ENCODE measurements at regions of chr17 and their contacts with region 1.

Region 1: DNA sequence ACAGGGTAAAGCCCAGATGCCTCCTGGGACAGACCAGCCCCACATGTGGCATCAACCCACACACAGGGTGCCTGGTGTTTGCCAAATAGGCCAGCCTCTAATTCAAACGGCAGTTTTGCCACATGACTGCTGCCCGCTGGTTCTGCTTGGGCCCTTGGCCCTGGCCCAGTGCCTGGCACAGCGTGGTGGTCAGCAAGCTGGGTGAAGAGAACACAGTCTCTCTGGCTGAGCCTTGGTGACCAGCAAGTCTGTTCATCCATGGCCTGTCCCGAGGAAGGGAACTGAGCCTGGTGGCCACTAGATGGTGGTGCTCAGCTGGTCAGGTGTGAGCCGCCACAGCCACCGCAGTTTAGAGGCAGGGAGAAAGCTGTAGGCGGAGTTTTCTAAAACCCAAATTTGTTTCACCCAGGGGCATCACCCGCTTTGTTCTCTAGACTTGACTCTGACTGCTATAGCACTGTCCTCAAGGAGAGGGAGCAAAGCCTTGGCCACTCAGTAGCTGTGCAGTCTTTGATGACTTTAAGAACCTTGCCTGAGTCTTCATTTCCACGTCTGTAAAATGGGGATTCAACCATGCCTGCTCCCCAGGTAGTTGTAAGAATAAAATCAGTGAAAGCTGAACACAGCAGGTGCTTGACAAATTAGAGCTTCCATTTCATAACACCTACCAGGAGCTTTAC is 4.7 kb upstream of the GFAP start:
- DNase-seq: peak; percentile 87
- ATAC-seq: peak; percentile 91
- H3K4me3 ChIP-seq: no peak overlapping the region
- H3K27ac ChIP-seq: no peak overlapping the region
- H3K4me1 ChIP-seq: no peaks in the 10 kb centered on the region
- H3K27me3 ChIP-seq: peaks cover 5% of the 10 kb centered on the region
- CTCF ChIP-seq: peak; percentile 79

Region 2: DNA sequence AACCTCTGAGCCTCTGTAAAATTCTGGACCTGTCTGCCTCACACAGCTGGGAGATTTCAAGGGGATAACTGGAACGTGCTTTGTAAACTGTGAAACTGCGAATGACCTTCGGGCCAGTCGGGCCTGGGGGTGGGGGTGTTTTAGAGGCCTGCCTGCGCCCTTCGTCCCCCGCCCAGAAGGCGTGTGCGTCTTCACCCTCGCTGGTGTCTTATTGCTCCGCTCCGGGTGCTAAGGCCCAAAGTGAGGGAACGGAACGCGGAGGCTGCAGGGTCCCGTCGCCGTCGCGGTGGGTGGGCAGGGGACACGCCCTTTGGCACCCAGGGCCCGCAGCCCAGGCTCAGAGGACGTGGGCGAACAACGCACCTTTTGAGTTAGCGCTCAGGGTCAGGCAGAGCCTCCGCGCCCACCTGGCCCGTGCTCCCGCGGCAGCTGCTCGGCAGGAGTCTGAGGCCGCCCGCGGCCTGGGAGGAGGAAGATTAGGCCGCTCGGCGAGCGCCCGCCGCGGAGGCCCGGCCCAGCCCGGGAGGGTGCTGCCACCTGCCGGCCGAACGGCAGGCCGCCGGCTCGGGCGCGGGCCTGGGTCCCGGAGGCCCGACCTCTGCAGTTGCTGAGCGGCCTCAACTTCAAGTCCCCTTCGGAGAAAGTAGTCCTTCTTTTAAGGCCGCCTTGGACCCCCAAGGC is 101.7 kb after region 1 on chr17:
- intact Hi-C with region 1: loop called (anchors 5 kb)
- DNase-seq: peak; percentile 87
- ATAC-seq: peak; percentile 91
- H3K4me3 ChIP-seq: peak overlapping the region; percentile 46
- H3K27ac ChIP-seq: peak overlapping the region; percentile 53
- H3K4me1 ChIP-seq: peaks cover 20% of the 10 kb centered on the region
- H3K27me3 ChIP-seq: peaks cover 9% of the 10 kb centered on the region
- CTCF ChIP-seq: peak; percentile 88

Region 3: GRCh38 chr17:45110668-45111611 is 190.9 kb after region 1 on chr17:
- intact Hi-C with region 1: loop called (anchors 10 kb)
- DNase-seq: no peak
- ATAC-seq: no peak
- H3K4me3 ChIP-seq: no peak overlapping the region
- H3K27ac ChIP-seq: peak overlapping the region; percentile 11
- H3K4me1 ChIP-seq: no peaks in the 10 kb centered on the region
- H3K27me3 ChIP-seq: no peaks in the 10 kb centered on the region
- CTCF ChIP-seq: no peak